ENCODE measurements at regions of chr12 and their contacts with region 1.

Region 1: GRCh38 chr12:108514973-108515814 is at the start of gene FICD:
- DNase-seq: peak; percentile 100

Region 2: GRCh38 chr12:107685360-107686248 is 829.6 kb before region 1 on chr12 and contains the start of gene PWP1:
- intact Hi-C with region 1: loop called (anchors 10 kb)
- DNase-seq: peak; percentile 81 to 99 (median 91)

Region 3: GRCh38 chr12:107917912-107918800 is 597.0 kb before region 1 on chr12:
- intact Hi-C with region 1: loop called (anchors 5 kb)
- DNase-seq: peak in 3 of 10 donors; percentile 14 to 29 (median 18)

Region 4: DNA sequence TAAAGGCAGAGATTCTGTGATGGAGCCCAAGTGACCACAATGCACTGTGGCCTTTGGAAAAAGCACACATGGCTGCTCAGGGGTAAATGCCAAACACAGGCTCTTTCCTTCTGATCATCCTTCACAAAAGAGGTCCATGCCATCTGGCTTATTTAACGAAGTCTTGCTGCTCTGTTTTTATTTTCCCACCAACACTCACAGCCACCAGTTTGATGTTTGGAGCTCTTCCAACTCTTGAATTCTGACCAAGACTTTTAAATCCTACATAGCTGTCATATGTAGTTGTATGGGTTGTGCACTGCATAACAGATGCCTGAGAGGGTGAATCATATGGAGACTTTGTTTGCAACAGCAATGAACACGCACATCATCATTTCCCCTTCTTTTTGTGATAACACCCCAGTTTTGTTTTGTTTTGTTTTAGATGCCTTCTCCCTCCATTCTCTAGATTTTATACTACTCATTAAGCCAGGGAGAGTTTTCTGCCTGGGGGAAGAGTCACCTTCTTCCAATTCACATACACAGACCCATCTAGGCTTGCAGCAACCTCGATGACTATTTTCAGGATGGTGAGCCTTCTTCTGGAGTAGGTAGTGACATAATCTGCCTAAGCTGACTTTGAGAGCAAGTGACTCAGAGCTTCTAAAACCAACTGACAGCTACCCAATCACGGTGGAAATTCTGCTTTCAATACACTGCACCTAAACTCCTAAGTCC is 531.3 kb before region 1 on chr12:
- intact Hi-C with region 1: loop called (anchors 10 kb)
- DNase-seq: no peak

Region 5: DNA sequence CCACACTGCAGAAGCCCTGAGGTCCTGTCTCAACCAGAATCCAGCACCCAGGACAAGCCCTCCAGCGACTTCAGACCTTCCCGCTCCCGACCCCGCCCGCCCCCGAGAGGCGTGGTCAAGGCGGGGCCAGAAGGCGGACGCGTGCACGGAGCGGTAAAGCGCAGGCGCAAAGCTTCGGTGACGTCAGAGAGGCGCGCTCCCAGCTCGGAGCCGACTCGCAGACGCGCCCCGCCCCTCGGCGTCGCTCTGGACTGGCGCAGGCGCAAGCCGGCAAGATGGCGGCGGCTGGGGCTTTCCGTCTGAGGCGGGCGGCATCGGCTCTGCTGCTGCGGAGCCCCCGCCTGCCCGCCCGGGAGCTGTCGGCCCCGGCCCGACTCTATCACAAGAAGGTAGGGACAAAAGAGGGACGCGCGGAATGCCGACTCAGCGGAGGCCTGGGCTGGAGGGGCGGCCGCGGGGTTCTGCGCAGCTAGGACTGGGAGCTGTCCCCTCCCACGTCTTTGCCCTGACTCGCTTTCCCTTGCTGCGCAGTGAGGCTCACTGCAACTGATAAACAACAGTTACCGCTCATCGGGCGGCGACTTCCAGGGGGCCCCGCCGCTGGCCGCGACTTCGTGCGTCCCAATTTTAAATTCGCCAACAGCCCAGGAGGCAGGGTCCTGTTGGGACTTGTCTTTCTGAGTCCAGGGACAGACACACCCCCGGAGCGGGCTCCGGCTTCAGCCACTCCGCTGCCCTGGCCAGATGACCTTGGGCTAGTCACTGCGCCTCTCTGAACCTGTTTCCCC is 47.3 kb after region 1 on chr12 and contains the start of gene ISCU:
- intact Hi-C with region 1: loop called (anchors 5 kb)
- DNase-seq: peak; percentile 96 to 100 (median 98)